Thyroid gland (tissue), 4 donors: ENCODE measurements at regions of chr13 and their contacts with region 1.

Region 1: GRCh38 chr13:111216166-111216960 is 101.3 kb downstream of the ARHGEF7 start:
- DNase-seq: peak; percentile 47 to 49
- H3K4me3 ChIP-seq: no peak overlapping the region
- H3K27ac ChIP-seq: peak overlapping the region in 1 of 3 donors; percentile 10
- H3K4me1 ChIP-seq: peaks cover 13 to 22% of the 10 kb centered on the region in 2 donors
- H3K27me3 ChIP-seq: no peaks in the 10 kb centered on the region
- CTCF ChIP-seq: peak in 3 of 6 experiments; percentile 41 to 58 (median 48)
- POLR2A ChIP-seq: no peak

Region 2: GRCh38 chr13:111066544-111066943 is 149.8 kb before region 1 on chr13:
- intact Hi-C with region 1: loop called (anchors 5 kb)
- DNase-seq: no peak
- H3K4me3 ChIP-seq: no peak overlapping the region
- H3K27ac ChIP-seq: no peak overlapping the region
- H3K4me1 ChIP-seq: no peaks in the 10 kb centered on the region
- H3K27me3 ChIP-seq: no peaks in the 10 kb centered on the region
- CTCF ChIP-seq: no peak
- POLR2A ChIP-seq: no peak

Region 3: DNA sequence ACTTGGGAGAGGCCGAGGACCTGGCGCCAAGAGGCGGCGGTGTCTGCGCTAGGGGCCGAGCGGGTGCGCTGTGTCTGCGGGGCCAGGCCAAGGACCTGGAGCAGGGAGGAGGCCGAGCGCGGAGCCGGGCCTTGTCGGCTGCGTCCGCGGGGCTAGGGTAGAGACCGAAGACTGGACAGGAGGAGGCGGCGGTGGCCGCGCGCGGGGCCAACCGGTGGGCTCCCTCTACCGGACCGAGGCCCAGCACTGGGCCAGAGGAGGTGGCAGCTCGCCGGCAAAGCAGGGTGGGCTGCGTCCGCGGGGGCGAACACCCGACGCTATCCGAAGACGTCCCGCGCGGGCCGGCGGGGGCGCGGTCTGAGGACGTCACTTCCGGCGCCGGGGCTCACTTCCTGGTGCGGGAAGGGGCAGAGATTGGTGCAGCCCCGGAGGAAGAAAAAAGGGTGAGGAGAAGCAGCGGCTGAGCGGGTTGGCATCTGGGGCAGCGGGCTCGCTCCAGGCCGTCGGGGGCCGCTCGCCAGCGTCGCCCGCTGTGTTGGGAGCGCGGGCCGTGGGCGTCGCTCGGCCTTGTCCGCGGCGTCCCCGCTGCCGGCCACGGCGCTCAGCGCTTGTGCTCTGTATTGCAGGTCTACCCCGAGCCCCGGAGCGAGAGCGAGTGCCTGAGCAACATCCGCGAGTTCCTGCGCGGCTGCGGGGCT is 62.9 kb before region 1 on chr13:
- intact Hi-C with region 1: loop called (anchors 10 kb)
- DNase-seq: peak; percentile 89 to 91
- H3K4me3 ChIP-seq: peak overlapping the region; percentile 43 to 93 (median 73)
- H3K27ac ChIP-seq: peak overlapping the region; percentile 88 to 93 (median 89)
- H3K4me1 ChIP-seq: peaks cover 13 to 30% of the 10 kb centered on the region in 2 donors
- H3K27me3 ChIP-seq: no peaks in the 10 kb centered on the region
- CTCF ChIP-seq: peak in 1 of 6 experiments; percentile 11
- POLR2A ChIP-seq: peak; percentile 66 to 90

Region 4: GRCh38 chr13:111270765-111271698 is 54.7 kb after region 1 on chr13:
- intact Hi-C with region 1: no loop called
- DNase-seq: no peak
- H3K4me3 ChIP-seq: no peak overlapping the region
- H3K27ac ChIP-seq: no peak overlapping the region
- H3K4me1 ChIP-seq: peaks cover 0 to 4% of the 10 kb centered on the region in 2 donors
- H3K27me3 ChIP-seq: no peaks in the 10 kb centered on the region
- CTCF ChIP-seq: no peak
- POLR2A ChIP-seq: no peak